ENCODE measurements at regions of chr4 and their contacts with region 1.

Region 1: GRCh38 chr4:40228497-40229365 is 31.9 kb downstream of the RHOH start:
- DNase-seq: peak; percentile 56
- H3K4me3 Mint-ChIP-seq: peak overlapping the region; percentile 58
- H3K27ac Mint-ChIP-seq: peak overlapping the region; percentile 92
- H3K4me1 Mint-ChIP-seq: peaks cover 93% of the 10 kb centered on the region
- H3K27me3 Mint-ChIP-seq: no peaks in the 10 kb centered on the region

Region 2: GRCh38 chr4:40205259-40206198 is 23.2 kb before region 1 on chr4:
- CTCF ChIA-PET with region 1: interaction called, 17 read pairs
- POLR2A ChIA-PET with region 1: interaction called, 97 read pairs
- intact Hi-C with region 1: loop called (anchors 1 kb)
- DNase-seq: peak; percentile 69
- H3K4me3 Mint-ChIP-seq: peak overlapping the region; percentile 93
- H3K27ac Mint-ChIP-seq: peak overlapping the region; percentile 98
- H3K4me1 Mint-ChIP-seq: peaks cover 61% of the 10 kb centered on the region
- H3K27me3 Mint-ChIP-seq: no peaks in the 10 kb centered on the region

Region 3: DNA sequence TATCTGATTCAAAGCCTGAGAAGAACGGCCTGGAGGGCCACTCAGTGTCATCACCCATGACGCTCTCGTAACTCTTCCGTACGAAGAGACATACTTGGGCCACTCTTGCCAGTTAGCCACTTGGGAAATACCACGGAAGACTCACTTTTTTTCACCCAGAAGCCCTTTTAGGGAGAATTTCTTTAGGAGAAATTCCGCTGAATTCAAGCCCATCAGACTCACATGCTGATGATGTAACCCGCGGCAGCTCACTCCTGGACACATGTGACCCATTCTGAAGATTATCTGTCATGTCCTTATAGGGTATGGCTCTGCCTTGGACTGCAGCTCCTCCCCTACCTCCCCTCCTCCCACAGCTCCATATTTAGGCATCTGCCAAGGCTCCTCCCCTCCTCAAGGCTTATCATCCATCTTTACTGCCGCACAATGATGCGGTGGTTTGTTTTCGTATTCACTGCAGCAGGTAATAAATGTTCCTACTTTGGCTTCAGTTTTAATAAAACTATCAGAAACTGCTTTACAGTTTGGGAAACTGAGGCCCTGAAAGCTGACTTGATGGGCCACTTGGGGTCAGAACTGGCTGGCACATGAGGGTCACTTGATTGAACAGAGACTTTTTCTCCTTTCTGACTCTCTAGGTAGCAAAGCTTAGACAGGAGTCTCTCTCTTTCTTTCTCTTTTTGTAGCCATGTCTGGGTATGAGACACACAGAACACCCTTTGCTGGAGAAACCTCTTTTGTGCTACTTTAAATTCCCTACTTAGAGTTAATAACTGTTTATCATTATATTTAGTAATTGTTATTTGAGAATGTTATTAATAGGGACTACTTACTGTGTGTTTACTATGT is 10.2 kb after region 1 on chr4:
- CTCF ChIA-PET with region 1: interaction called, 7 read pairs
- POLR2A ChIA-PET with region 1: interaction called, 13 read pairs
- intact Hi-C with region 1: loop called (anchors 1 kb)
- DNase-seq: peak; percentile 91
- H3K4me3 Mint-ChIP-seq: peak overlapping the region; percentile 75
- H3K27ac Mint-ChIP-seq: peak overlapping the region; percentile 96
- H3K4me1 Mint-ChIP-seq: peaks cover 88% of the 10 kb centered on the region
- H3K27me3 Mint-ChIP-seq: no peaks in the 10 kb centered on the region

Region 4: DNA sequence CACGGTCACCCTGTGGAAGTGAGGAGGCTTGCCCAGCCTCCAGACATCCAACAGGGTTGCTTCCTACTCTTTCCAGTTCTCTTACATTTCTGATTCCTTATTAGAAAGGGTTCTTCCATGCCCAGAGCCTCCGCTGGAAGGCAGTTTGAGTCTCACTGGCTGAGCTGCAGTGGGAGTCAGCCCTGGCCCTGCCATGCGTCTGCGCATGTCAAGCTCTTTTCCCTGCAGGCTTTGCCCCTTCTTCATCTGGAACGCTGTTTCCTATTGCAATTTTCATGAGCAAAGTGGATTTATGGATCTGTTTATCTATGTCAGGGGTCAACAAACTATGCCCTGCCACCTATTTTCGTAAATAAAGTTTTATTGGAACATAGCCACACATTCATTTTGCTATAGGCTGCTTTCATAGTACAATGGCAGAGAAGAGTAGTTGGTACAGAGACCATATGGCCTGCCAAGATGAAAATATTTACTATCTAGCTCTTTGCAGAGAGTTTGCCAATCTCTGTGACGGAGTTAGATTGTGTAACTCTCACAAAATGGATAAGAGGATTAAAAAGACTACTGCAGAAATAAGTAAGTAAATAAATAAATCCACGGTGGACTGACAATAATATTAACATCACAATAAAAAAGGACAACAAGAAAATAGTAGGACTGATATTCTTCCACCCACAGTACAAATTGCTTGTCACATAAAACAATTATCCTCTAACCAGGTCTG is 102.5 kb after region 1 on chr4:
- CTCF ChIA-PET with region 1: no interaction called
- POLR2A ChIA-PET with region 1: no interaction called
- intact Hi-C with region 1: no loop called
- DNase-seq: no peak
- H3K4me3 Mint-ChIP-seq: no peak overlapping the region
- H3K27ac Mint-ChIP-seq: no peak overlapping the region
- H3K4me1 Mint-ChIP-seq: no peaks in the 10 kb centered on the region
- H3K27me3 Mint-ChIP-seq: no peaks in the 10 kb centered on the region

Region 5: DNA sequence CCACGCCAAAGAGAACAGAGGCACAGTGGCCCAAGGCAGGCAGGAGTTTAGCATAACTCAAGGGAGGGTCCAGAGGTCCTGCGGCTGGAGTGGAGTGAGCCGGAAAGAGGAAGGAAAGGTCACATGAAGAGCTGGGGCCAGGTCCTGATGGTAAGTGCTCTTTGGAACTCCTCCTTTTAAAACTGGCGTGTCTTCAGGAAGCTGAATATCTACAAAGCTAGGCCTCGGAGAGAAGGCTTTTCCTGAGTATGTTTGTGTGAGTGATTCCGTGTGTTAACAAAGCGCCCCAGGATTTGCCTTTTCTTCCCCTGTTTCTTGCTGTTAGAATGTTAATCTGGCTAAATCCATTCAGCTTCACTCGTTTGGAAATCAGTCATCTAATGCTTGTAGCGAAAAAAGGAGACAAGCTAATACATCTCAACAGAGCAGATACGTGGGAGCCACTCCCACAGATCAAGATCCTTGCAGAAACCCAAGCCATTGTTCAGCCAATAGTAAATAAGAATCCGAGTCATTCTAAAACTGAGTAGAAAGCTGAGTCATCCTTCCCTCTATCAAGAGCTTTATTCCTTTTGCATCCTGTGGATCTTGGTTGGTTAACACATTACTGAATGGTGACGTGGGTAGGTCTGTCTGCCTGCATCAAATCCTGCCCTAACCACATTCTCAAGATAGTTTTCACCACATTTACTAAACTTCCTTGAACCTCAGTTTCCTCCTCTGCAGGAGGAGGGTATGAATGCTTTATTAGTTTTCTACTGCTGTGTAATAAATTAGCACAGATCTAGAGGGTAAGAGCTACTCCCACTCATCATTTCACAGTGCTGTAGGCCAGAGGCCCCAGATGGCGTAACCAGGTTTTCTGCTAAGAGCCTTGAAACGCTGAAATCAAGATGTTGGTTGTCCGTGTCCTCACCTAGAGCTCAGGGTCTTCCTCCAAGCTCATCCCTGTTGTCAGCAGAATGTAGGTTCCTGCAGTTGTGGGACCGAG is 444.1 kb after region 1 on chr4:
- CTCF ChIA-PET with region 1: no interaction called
- POLR2A ChIA-PET with region 1: no interaction called
- intact Hi-C with region 1: loop called (anchors 5 kb)
- DNase-seq: peak; percentile 71
- H3K4me3 Mint-ChIP-seq: peak overlapping the region; percentile 63
- H3K27ac Mint-ChIP-seq: peak overlapping the region; percentile 92
- H3K4me1 Mint-ChIP-seq: peaks cover 50% of the 10 kb centered on the region
- H3K27me3 Mint-ChIP-seq: no peaks in the 10 kb centered on the region